Activated T-helper 1 cell treated with anti-CD3 and anti-CD28 coated beads, Interleukin-12 subunit alpha, Interleukin-12 subunit beta, Interleukin-2, Interleukin-4 antibody, amounts not matched to agents 30 ng/mL and 10 ng/mL and 1 ng/mL, durations not matched to agents 14 hours and 24 hours and 36 hours (primary cell): ENCODE measurements at regions of chr17 and their contacts with region 1.

Region 1: GRCh38 chr17:80147035-80147836 is at the start of gene EIF4A3:
- DNase-seq: peak; percentile 97
- H3K4me3 Mint-ChIP-seq: peak within 1 kb of the TSS; percentile 88
- H3K27ac Mint-ChIP-seq: peak within 1 kb of the TSS; percentile 92
- H3K4me1 Mint-ChIP-seq: peaks cover 39% of the 10 kb centered on the region
- H3K27me3 Mint-ChIP-seq: no peaks in the 10 kb centered on the region
- total RNA-seq, gene EIF4A3: 179 and 182 TPM in 2 replicates

Region 2: DNA sequence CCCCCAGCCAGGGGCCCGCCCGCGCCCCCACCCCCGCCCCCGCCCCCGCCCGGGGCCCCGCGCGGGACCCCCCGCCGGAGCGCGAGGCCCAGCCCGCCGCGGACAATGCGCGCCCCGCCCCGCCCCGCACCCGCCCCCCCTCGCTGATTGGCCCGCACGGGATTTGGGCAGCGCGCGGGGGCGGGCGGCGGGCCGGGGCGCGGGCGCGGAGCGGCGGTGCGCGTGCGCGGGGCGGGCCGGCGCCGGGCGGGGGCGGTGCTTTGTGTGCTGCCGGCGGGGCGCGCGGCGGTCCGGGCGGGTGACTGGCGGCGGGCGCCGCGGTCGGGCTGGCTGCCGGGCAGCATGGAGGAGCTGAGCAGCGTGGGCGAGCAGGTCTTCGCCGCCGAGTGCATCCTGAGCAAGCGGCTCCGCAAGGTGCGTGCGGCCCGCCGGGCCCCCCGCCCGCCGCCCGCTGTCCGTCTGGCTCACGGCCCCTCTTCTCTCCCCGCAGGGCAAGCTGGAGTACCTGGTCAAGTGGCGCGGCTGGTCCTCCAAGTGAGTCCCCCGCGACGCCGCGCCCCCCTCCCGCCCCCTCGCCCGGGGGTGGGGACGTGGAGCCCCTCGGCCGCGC is 369.2 kb before region 1 on chr17 and contains the start of gene CBX2:
- intact Hi-C with region 1: loop called (anchors 10 kb)
- DNase-seq: peak; percentile 78
- H3K4me3 Mint-ChIP-seq: peak within 1 kb of the TSS; percentile 84
- H3K27ac Mint-ChIP-seq: peak within 1 kb of the TSS; percentile 87
- H3K4me1 Mint-ChIP-seq: peaks cover 12% of the 10 kb centered on the region
- H3K27me3 Mint-ChIP-seq: peaks cover 59% of the 10 kb centered on the region
- total RNA-seq, gene CBX2: 4.7 and 5.1 TPM in 2 replicates

Region 3: GRCh38 chr17:80035943-80036714 is 111.1 kb before region 1 on chr17 and contains the start of gene CCDC40:
- intact Hi-C with region 1: loop called (anchors 1 kb)
- DNase-seq: peak; percentile 77
- H3K4me3 Mint-ChIP-seq: peak within 1 kb of the TSS; percentile 85
- H3K27ac Mint-ChIP-seq: peak within 1 kb of the TSS; percentile 91
- H3K4me1 Mint-ChIP-seq: peaks cover 5% of the 10 kb centered on the region
- H3K27me3 Mint-ChIP-seq: peaks cover 50% of the 10 kb centered on the region
- total RNA-seq, gene CCDC40: 0.15 and 0.16 TPM in 2 replicates

Region 4: GRCh38 chr17:80219013-80219762 is 72.0 kb after region 1 on chr17:
- intact Hi-C with region 1: loop called (anchors 1 kb)
- DNase-seq: peak; percentile 75
- H3K4me3 Mint-ChIP-seq: peak overlapping the region; percentile 85
- H3K27ac Mint-ChIP-seq: peak overlapping the region; percentile 85
- H3K4me1 Mint-ChIP-seq: peaks cover 20% of the 10 kb centered on the region
- H3K27me3 Mint-ChIP-seq: no peaks in the 10 kb centered on the region

Region 5: DNA sequence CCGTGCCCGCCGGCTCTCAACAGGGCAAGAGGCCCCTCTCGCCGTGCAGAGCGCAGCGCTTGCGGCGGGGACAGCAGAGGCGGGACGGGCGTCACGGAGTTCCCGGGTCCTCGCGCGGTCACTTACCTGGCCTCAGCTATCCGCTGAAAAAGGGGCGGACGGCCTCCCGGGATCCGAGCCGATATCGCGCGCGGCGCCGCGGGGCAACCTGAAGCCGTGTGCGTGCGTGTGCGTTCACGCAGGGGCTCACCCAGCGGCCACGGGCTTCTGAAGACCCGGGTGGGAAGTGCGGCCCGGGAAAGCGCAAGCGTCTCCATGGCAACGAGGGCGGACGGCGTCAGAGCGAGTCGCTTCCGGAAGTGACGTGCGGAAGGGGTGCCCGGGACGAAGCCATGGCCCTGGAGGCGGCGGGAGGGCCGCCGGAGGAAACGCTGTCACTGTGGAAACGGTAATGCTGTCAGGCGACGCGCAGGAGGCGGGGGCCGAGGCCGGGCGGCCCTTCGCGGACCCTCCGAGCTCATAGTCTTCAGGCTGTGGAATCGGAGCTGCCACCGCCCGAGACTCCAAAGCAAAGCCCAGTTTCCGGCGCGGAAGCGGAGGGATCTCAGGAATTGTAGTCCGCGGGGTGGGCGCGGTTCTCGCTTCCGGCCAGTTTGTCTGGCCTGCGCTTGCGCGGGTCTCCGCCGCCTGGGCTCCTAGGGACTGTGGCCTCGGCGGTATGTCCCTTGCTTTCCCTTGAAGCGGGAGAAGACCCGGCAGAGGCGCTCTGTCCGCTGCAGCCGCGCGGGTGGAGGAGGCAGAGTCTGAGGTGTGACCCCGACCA is 267.8 kb after region 1 on chr17 and contains the start of gene ENDOV:
- intact Hi-C with region 1: loop called (anchors 1 kb)
- DNase-seq: peak; percentile 90
- H3K4me3 Mint-ChIP-seq: peak within 1 kb of the TSS; percentile 87
- H3K27ac Mint-ChIP-seq: peak within 1 kb of the TSS; percentile 65
- H3K4me1 Mint-ChIP-seq: peaks cover 18% of the 10 kb centered on the region
- H3K27me3 Mint-ChIP-seq: peaks cover 16% of the 10 kb centered on the region
- total RNA-seq, gene ENDOV: 15.6 and 16.9 TPM in 2 replicates